ENCODE measurements at regions of chr12 and their contacts with region 1.

Region 1: DNA sequence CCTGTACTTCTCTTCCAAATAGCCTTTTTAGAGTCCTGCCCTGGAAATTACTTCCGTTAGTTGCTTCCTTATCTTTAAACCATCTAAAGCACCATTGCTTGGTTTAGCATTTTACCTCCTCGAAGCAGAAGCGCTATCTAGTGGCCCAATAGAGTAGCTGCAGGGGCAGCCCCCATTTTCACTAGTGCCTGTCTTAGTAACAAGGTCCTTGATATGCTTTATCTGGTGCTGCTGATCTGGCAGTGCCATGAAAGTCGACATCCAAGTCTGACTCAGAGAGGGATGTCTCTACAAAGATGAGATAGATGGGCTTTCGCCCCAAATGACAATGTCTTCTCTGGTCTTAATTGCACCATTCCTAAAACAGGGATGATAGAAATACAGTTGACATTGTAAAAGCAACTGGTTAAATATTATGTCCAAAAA is 25.0 kb upstream of the CIT start:
- DNase-seq: peak; percentile 69
- ATAC-seq: no peak

Region 2: GRCh38 chr12:119804011-119804641 is 98.0 kb before region 1 on chr12:
- intact Hi-C with region 1: loop called (anchors 5 kb)
- DNase-seq: peak; percentile 72
- ATAC-seq: peak; percentile 84

Region 3: DNA sequence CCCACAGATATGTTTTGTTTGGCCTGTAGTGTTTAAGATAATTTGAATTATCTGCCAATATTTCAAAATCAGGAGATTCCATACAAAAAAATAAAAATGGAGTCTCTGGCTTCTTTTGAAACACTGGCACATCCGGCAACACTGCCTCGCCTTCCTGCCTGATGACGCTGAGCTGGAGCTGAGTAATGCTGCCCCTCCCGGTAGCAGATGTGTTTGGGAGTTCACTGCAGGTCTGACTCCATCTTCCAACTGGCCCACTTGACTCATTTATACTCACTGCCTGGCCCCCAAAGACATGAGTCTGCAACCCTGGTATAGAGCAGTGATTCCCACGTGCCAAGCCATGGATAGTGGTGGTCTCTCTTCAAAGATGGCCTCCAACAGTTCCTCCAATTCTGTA is 32.4 kb before region 1 on chr12:
- intact Hi-C with region 1: no loop called
- DNase-seq: no peak
- ATAC-seq: peak; percentile 74